CD8-positive, alpha-beta memory T cell (primary cell): ENCODE measurements at regions of chr7 and their contacts with region 1.

Region 1: GRCh38 chr7:30933124-30933932 is 21.7 kb downstream of the AQP1 start:
- DNase-seq: no peak
- H3K4me3 ChIP-seq: no peak overlapping the region
- H3K4me3 Mint-ChIP-seq: peak overlapping the region in 1 of 7 donors; percentile 51
- H3K27ac ChIP-seq: no peak overlapping the region
- H3K27ac Mint-ChIP-seq: no peak overlapping the region
- H3K4me1 ChIP-seq: no peaks in the 10 kb centered on the region
- H3K4me1 Mint-ChIP-seq: no peaks in the 10 kb centered on the region
- H3K27me3 ChIP-seq: no peaks in the 10 kb centered on the region
- H3K27me3 Mint-ChIP-seq: peaks cover 4 to 10% of the 10 kb centered on the region in 2 donors

Region 2: DNA sequence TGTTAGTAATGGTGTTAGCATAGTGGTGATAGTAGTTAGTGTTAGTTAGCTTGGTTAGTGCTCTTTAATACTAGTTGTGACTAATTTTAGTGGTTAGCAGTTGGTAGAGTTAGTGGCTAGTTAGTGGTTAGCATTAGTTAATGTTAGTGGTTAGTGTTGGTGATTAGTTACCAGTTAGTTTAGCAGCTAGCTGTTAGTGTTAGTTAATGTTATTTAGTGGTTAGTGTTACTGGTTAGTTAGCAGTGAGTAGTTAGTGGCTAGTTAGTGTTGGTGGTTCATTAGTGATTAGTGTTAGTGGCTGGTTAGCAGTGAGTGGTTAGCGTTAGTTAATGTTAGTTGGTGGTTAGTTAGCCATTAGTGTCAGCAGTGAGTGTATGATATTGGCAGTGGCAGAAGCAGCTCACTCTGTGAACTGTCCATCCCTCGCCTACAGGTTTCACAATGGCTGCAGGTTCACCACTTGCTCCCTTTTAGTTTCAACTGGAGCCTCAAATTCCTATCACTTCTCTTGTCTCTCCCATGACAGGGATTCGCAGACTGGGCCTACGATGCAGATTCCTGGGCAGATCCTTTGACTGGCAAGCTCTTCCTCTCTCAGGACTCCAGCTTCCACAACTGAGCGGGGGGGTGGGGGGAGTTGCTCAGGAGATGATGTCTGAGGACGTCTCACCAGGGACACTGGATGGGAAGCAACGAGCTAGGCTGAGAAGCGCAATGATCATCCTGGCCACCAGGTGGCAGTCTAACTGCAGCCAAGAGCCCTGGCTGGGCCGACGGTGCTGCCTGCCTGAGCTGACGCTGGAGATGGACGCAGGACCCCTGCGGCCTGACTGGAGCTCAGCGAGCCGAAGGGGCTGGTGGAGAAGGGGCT is 50.0 kb after region 1 on chr7:
- CTCF ChIA-PET with region 1: interaction called, 10 read pairs
- POLR2A ChIA-PET with region 1: no interaction called
- DNase-seq: peak; percentile 47 to 73 (median 56)
- H3K4me3 ChIP-seq: no peak overlapping the region
- H3K4me3 Mint-ChIP-seq: peak overlapping the region in 3 of 7 donors; percentile 30 to 76 (median 46)
- H3K27ac ChIP-seq: no peak overlapping the region
- H3K27ac Mint-ChIP-seq: peak overlapping the region in 1 of 8 donors; percentile 64
- H3K4me1 ChIP-seq: no peaks in the 10 kb centered on the region
- H3K4me1 Mint-ChIP-seq: peaks cover 7 to 31% (median 9%) of the 10 kb centered on the region in 3 donors
- H3K27me3 ChIP-seq: no peaks in the 10 kb centered on the region
- H3K27me3 Mint-ChIP-seq: peaks cover 9 to 65% of the 10 kb centered on the region in 2 donors